ENCODE measurements at regions of chr11 and their contacts with region 1.

Region 1: DNA sequence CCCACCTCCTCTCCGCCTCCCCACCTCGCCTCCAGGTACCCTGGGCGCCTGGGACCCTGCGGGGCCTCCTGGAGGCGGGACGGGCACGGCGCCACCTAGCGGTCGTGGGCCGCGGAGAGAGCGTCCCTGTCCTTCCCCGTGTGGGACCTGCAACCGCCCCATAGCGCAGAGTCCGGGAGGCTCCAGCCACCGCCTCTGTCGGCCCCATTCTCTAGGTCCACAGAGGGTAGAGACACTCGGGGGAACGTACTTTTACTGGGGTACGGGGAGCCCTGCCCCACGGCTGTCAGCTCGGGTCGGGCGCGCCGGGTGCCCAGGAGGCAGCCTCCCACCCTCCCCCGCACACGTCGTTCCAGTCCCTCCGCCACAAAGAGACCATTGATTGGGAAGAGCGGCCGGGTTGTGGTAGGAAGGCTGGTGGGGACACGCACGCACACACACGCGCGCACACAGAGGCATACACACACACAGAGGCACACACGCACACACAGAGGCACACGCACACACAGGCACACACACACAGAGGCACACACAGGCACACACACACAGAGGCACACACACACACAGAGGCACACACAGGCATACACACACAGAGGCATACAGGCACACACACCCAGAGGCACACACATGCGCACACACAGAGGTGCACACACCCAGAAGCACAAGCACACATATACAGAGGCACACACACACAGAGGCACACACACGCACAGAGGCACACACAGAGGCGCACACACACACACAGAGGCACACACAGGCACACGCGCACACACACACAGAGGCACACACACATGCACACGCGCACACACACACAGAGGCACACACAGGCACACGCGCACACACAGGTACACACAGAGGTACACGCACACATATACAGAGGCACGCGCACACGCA is 12.6 kb upstream of the NECTIN1 start:
- DNase-seq: peak; percentile 66 to 73 (median 69)
- ATAC-seq: peak; percentile 85 to 92 (median 86)
- H3K4me3 ChIP-seq: no peak overlapping the region
- H3K27ac ChIP-seq: no peak overlapping the region
- H3K4me1 ChIP-seq: peaks cover 0 to 5% (median 0%) of the 10 kb centered on the region in 4 donors
- H3K27me3 ChIP-seq: peaks cover 0 to 7% of the 10 kb centered on the region in 2 donors
- CTCF ChIP-seq: peak; percentile 72 to 91 (median 80)
- POLR2A ChIP-seq: no peak

Region 2: GRCh38 chr11:119935349-119935925 is 193.8 kb after region 1 on chr11:
- intact Hi-C with region 1: no loop called
- DNase-seq: no peak
- ATAC-seq: no peak
- H3K4me3 ChIP-seq: no peak overlapping the region
- H3K27ac ChIP-seq: no peak overlapping the region
- H3K4me1 ChIP-seq: no peaks in the 10 kb centered on the region
- H3K27me3 ChIP-seq: no peaks in the 10 kb centered on the region
- CTCF ChIP-seq: no peak
- POLR2A ChIP-seq: no peak

Region 3: GRCh38 chr11:120108154-120108865 is 366.7 kb after region 1 on chr11:
- intact Hi-C with region 1: loop called in 1 of 2 experiments (anchors 10 kb)
- DNase-seq: peak; percentile 71 to 74 (median 74)
- ATAC-seq: peak; percentile 89 to 98 (median 93)
- H3K4me3 ChIP-seq: no peak overlapping the region
- H3K27ac ChIP-seq: no peak overlapping the region
- H3K4me1 ChIP-seq: no peaks in the 10 kb centered on the region
- H3K27me3 ChIP-seq: no peaks in the 10 kb centered on the region
- CTCF ChIP-seq: peak; percentile 98 to 100 (median 99)
- POLR2A ChIP-seq: no peak

Measured in right lobe of liver (tissue), 6 donors.